Vagina (tissue), 2 donors: ENCODE measurements at regions of chr19 and their contacts with region 1.

Region 1: DNA sequence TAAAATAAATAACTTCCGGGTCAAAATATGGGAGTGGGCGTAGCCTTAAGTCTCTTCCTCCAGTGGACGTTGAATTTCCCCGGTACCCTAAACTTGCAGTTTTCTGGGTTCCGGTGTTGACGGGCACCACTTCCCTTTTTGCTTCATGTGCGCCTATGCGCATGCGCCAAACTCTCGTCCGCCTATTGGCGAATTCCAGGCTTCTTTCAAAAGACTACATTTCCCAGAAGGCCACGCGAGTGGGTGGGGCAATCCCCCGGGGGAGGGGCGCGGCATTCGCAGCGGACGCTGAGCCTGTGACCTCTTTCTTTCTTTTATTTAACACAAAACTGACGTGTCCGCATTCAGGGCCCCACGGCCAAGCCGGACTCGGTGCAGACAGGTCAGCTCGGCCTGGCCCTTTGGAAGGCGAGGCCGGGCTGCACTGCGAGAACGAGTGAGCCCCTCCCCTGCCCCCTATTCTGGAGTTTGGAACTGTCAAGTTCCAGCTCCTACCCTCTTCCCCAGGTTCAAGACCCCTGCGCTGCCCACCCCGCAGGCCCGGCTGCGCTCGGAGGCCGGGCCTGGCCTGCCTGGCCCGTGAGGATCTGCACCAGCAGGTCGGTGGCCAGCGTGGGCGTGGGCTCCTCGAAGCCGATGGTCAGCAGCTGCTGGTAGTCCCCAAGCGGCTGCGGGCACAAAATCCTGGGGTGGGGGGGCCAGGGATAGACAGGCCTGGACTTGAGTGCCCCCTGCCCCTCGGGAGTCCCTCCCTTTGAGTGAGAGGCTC is 4.1 kb downstream of the C19orf67 start:
- DNase-seq: peak; percentile 99
- H3K4me3 ChIP-seq: peak overlapping the region; percentile 61 to 79
- H3K27ac ChIP-seq: peak overlapping the region; percentile 92
- H3K4me1 ChIP-seq: peaks cover 25% of the 10 kb centered on the region
- H3K27me3 ChIP-seq: no peaks in the 10 kb centered on the region
- CTCF ChIP-seq: peak in 2 of 3 experiments; percentile 7 to 26
- POLR2A ChIP-seq: peak; percentile 13 to 76

Region 2: GRCh38 chr19:14117668-14118164 is 36.2 kb after region 1 on chr19 and contains the start of gene PRKACA:
- intact Hi-C with region 1: loop called (anchors 5 kb)
- DNase-seq: peak in 1 of 2 donors; percentile 100
- H3K4me3 ChIP-seq: peak within 1 kb of the TSS; percentile 95 to 99
- H3K27ac ChIP-seq: peak within 1 kb of the TSS; percentile 98
- H3K4me1 ChIP-seq: peaks cover 66% of the 10 kb centered on the region
- H3K27me3 ChIP-seq: no peaks in the 10 kb centered on the region
- CTCF ChIP-seq: no peak
- POLR2A ChIP-seq: peak in 1 of 2 donors; percentile 74
- total RNA-seq, gene PRKACA: 28.0 TPM

Region 3: DNA sequence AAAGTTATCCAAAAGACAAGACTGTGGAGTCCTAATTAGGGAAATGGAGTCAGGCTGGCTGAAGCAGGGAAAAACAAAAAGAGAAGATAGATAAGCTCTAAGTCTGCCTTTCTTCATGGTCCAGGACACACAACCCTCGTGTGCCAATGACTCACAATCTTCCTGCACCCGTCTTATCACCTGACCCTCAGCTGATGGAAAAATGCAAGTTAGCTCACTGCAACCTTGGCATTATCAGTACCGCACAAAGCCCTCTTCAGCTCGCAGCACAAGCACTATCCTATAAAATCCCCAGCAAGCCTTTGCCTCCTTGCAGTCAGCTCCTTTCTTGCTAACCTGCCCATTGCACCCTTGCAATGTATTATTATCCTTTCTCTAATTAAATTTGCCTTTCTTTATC is 749.2 kb after region 1 on chr19:
- intact Hi-C with region 1: no loop called
- DNase-seq: no peak
- H3K4me3 ChIP-seq: no peak overlapping the region
- H3K27ac ChIP-seq: no peak overlapping the region
- H3K4me1 ChIP-seq: no peaks in the 10 kb centered on the region
- H3K27me3 ChIP-seq: no peaks in the 10 kb centered on the region
- CTCF ChIP-seq: no peak
- POLR2A ChIP-seq: no peak